Activated T-helper 1 cell treated with anti-CD3 and anti-CD28 coated beads, Interleukin-12 subunit alpha, Interleukin-12 subunit beta, Interleukin-2, Interleukin-4 antibody, amounts not matched to agents 30 ng/mL and 10 ng/mL and 1 ng/mL, durations not matched to agents 14 hours and 24 hours and 36 hours (primary cell): ENCODE measurements at regions of chr15 and their contacts with region 1.

Region 1: GRCh38 chr15:36579792-36580431 is 486 bp downstream of the CDIN1 start:
- DNase-seq: no peak
- H3K4me3 Mint-ChIP-seq: peak overlapping the region; percentile 87
- H3K27ac Mint-ChIP-seq: peak overlapping the region; percentile 89
- H3K4me1 Mint-ChIP-seq: peaks cover 35% of the 10 kb centered on the region
- H3K27me3 Mint-ChIP-seq: peaks cover 5% of the 10 kb centered on the region

Region 2: DNA sequence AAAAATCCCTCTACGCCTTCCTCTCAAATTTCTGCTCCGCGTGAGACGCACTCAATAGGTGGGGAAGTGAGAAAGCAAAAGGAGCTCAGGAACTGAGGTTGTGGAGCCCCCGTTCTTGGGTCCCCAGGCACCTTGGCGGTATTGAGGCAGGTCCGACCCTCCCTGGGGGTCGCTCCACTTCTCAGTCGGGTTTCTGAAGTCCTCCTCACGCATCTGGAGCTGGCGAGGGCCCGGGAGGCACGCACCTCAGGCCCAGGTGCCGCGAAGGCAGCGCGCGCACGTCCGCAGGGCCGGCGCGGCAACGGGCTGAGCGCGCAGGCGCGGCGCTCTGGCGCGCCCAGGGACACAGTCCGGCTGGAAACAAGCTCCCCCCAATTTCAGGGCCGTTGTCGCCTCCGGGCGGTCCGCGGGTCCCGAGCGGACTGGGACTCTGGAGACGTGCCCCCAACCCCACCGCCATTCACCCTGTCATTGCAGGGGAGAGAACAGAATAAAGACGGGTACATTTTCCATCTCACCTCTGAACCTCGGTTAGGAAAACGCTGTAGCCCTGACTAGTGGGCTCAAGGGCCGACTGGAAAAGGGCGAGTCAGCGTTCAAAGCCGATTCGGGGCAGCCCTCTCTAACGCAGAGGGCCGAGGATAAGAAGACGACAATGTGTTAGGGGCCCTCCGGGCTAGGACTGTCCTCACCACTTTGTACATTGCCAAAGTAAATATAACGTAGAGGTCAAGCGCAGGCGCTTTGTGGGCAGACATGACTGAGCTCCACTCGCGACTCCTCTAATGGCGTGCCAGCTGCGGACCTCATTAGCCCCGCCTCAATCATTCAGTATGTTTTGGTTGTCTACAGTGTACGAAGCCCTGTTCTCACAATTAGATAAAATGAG is 1591.7 kb before region 1 on chr15 and contains the start of gene ZNF770:
- intact Hi-C with region 1: loop called (anchors 5 kb)
- DNase-seq: peak; percentile 84
- H3K4me3 Mint-ChIP-seq: peak within 1 kb of the TSS; percentile 97
- H3K27ac Mint-ChIP-seq: peak within 1 kb of the TSS; percentile 96
- H3K4me1 Mint-ChIP-seq: peaks cover 44% of the 10 kb centered on the region
- H3K27me3 Mint-ChIP-seq: no peaks in the 10 kb centered on the region
- total RNA-seq, gene ZNF770: 50.1 and 50.6 TPM in 2 replicates

Region 3: GRCh38 chr15:35674873-35675781 is 904.8 kb before region 1 on chr15:
- intact Hi-C with region 1: loop called (anchors 10 kb)
- DNase-seq: no peak
- H3K4me3 Mint-ChIP-seq: no peak overlapping the region
- H3K27ac Mint-ChIP-seq: no peak overlapping the region
- H3K4me1 Mint-ChIP-seq: peaks cover 13% of the 10 kb centered on the region
- H3K27me3 Mint-ChIP-seq: peaks cover 3% of the 10 kb centered on the region